Mucosa of descending colon (tissue), 3 donors: ENCODE measurements at regions of chr15 and their contacts with region 1.

Region 1: GRCh38 chr15:89358755-89359439 is 24.3 kb upstream of the POLG start:
- DNase-seq: peak; percentile 81 to 88 (median 83)
- ATAC-seq: peak; percentile 97
- H3K4me3 ChIP-seq: no peak overlapping the region
- H3K4me1 ChIP-seq: peaks cover 13% of the 10 kb centered on the region
- CTCF ChIP-seq: peak; percentile 98

Region 2: GRCh38 chr15:89247441-89247840 is 111.5 kb before region 1 on chr15:
- intact Hi-C with region 1: no loop called
- DNase-seq: no peak
- ATAC-seq: no peak
- H3K4me3 ChIP-seq: no peak overlapping the region
- H3K4me1 ChIP-seq: peaks cover 8% of the 10 kb centered on the region
- CTCF ChIP-seq: no peak

Region 3: DNA sequence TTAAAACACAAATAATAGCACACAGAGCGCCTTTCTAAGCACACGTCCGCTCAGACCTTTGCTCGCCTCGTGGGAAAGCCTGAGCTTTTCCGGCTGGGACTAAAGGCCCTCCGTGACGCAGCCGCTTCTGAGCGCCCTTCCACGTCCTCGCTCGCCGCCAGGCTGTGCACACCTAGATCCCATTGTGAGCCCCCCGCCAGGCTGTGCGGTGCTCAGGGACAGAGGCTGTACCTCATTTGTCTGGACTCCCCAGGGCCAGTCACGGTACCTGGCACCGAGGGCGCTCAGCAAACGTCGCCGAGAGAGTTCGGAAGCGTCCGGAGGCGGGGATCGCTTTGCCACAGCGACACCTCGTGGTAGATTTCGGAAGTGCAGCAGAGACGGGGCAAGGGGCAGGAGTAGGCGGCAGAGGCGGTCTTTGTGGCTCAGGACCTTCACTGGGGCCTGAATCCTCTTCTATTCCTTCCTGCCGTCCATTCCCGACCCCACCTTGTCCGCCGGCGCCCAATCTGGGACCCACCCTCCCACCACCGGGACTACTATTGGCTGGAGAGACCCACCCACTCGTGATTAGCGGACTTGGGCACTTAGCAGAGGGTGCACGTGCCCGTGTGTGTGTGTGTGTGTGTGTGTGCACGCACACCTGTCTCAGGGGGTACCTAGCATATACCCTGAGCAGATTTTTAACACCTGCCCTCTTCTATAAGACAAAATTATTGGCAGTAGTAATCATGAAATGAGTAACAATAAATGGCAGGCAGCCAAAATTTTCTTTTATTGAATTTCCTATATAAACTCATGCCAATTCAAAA is 71.8 kb after region 1 on chr15:
- intact Hi-C with region 1: loop called (anchors 2 to 5 kb)
- DNase-seq: peak; percentile 83 to 94 (median 93)
- ATAC-seq: peak; percentile 98
- H3K4me3 ChIP-seq: no peak overlapping the region
- H3K4me1 ChIP-seq: no peaks in the 10 kb centered on the region
- CTCF ChIP-seq: peak; percentile 98